Posterior vena cava (tissue), 2 donors: ENCODE measurements at regions of chr11 and their contacts with region 1.

Region 1: GRCh38 chr11:117316197-117316961 is at the start of gene BACE1:
- DNase-seq: peak; percentile 94
- total RNA-seq, gene BACE1: 25.2 to 36.1 TPM

Region 2: GRCh38 chr11:117333917-117334316 is 17.5 kb after region 1 on chr11:
- intact Hi-C with region 1: loop called in 1 of 2 experiments (anchors 1 kb)
- DNase-seq: no peak